ENCODE measurements at regions of chr1 and their contacts with region 1.

Region 1: GRCh38 chr1:171530676-171531075 is 45.3 kb downstream of the PRRC2C start:
- DNase-seq: no peak
- ATAC-seq: no peak
- H3K4me3 ChIP-seq: no peak overlapping the region
- H3K4me3 Mint-ChIP-seq: no peak overlapping the region
- H3K27ac ChIP-seq: no peak overlapping the region
- H3K27ac Mint-ChIP-seq: no peak overlapping the region
- H3K4me1 ChIP-seq: no peaks in the 10 kb centered on the region
- H3K4me1 Mint-ChIP-seq: peaks cover 3 to 18% (median 6%) of the 10 kb centered on the region in 7 donors
- H3K27me3 ChIP-seq: no peaks in the 10 kb centered on the region
- H3K27me3 Mint-ChIP-seq: no peaks in the 10 kb centered on the region

Region 2: GRCh38 chr1:171495444-171495843 is 35.2 kb before region 1 on chr1:
- CTCF ChIA-PET with region 1: no interaction called
- POLR2A ChIA-PET with region 1: no interaction called
- intact Hi-C with region 1: no loop called
- DNase-seq: no peak
- ATAC-seq: no peak
- H3K4me3 ChIP-seq: no peak overlapping the region
- H3K4me3 Mint-ChIP-seq: peak overlapping the region in 9 of 10 donors; percentile 34 to 66 (median 48)
- H3K27ac ChIP-seq: peak overlapping the region; percentile 19
- H3K27ac Mint-ChIP-seq: peak overlapping the region in 5 of 9 donors; percentile 6 to 85 (median 52)
- H3K4me1 ChIP-seq: peaks cover 40 to 45% of the 10 kb centered on the region in 2 donors
- H3K4me1 Mint-ChIP-seq: peaks cover 66 to 99% (median 90%) of the 10 kb centered on the region in 7 donors
- H3K27me3 ChIP-seq: no peaks in the 10 kb centered on the region
- H3K27me3 Mint-ChIP-seq: no peaks in the 10 kb centered on the region

Region 3: DNA sequence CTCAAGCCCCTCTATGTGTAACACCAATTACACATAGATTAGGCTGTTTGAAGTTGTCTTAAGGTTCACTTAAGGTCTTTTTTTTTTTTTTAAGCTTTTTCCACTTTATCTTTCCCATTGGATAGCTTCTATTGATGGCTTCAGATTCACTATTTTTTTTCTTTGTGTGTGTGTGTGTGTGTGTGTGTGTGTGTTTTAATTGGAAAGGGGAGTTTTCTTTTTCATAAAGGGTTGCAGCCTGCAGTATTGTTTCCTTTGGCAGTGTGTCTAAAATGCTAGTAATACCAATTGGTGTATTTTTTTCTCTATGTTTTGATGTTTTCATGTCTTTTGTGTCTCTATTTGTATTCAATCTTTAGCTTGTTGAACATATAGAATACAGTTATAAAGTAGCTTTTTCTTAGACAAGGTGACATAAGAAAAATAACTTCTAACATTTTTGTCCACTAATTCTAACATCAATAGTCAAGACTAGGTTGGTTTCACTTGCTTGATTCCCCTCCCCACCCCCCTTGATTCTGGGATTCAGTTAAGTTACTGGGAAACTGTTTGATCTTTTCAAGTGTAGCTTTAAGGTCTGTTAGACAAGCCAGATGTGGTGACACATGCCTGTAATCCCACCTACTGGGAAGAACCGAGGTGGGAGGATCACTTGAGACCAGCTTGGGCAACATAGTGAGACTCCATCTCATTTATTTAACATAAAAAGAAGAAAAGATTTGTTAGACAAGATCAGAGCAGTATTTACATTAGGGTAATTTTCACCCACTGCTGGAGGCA is 24.0 kb before region 1 on chr1:
- CTCF ChIA-PET with region 1: no interaction called
- POLR2A ChIA-PET with region 1: no interaction called
- intact Hi-C with region 1: loop called in 1 of 2 experiments (anchors 2 kb)
- DNase-seq: no peak
- ATAC-seq: peak; percentile 23
- H3K4me3 ChIP-seq: no peak overlapping the region
- H3K4me3 Mint-ChIP-seq: peak overlapping the region in 9 of 10 donors; percentile 48 to 73 (median 62)
- H3K27ac ChIP-seq: peak overlapping the region; percentile 42
- H3K27ac Mint-ChIP-seq: peak overlapping the region; percentile 43 to 85 (median 73)
- H3K4me1 ChIP-seq: peaks cover 50 to 72% of the 10 kb centered on the region in 2 donors
- H3K4me1 Mint-ChIP-seq: peaks cover 74 to 99% (median 95%) of the 10 kb centered on the region in 7 donors
- H3K27me3 ChIP-seq: no peaks in the 10 kb centered on the region
- H3K27me3 Mint-ChIP-seq: no peaks in the 10 kb centered on the region

Region 4: GRCh38 chr1:171550050-171550449 is 19.4 kb after region 1 on chr1:
- CTCF ChIA-PET with region 1: no interaction called
- POLR2A ChIA-PET with region 1: no interaction called
- intact Hi-C with region 1: loop called in 1 of 2 experiments (anchors 2 kb)
- DNase-seq: no peak
- ATAC-seq: no peak
- H3K4me3 ChIP-seq: no peak overlapping the region
- H3K4me3 Mint-ChIP-seq: no peak overlapping the region
- H3K27ac ChIP-seq: no peak overlapping the region
- H3K27ac Mint-ChIP-seq: no peak overlapping the region
- H3K4me1 ChIP-seq: no peaks in the 10 kb centered on the region
- H3K4me1 Mint-ChIP-seq: peaks cover 6 to 40% (median 33%) of the 10 kb centered on the region in 7 donors
- H3K27me3 ChIP-seq: no peaks in the 10 kb centered on the region
- H3K27me3 Mint-ChIP-seq: no peaks in the 10 kb centered on the region

Region 5: GRCh38 chr1:171563675-171564074 is 33.0 kb after region 1 on chr1:
- CTCF ChIA-PET with region 1: no interaction called
- POLR2A ChIA-PET with region 1: no interaction called
- intact Hi-C with region 1: loop called in 1 of 2 experiments (anchors 2 kb)
- DNase-seq: no peak
- ATAC-seq: no peak
- H3K4me3 ChIP-seq: no peak overlapping the region
- H3K4me3 Mint-ChIP-seq: no peak overlapping the region
- H3K27ac ChIP-seq: no peak overlapping the region
- H3K27ac Mint-ChIP-seq: no peak overlapping the region
- H3K4me1 ChIP-seq: no peaks in the 10 kb centered on the region
- H3K4me1 Mint-ChIP-seq: peaks cover 0 to 7% (median 0%) of the 10 kb centered on the region in 7 donors
- H3K27me3 ChIP-seq: no peaks in the 10 kb centered on the region
- H3K27me3 Mint-ChIP-seq: no peaks in the 10 kb centered on the region

Region 6: DNA sequence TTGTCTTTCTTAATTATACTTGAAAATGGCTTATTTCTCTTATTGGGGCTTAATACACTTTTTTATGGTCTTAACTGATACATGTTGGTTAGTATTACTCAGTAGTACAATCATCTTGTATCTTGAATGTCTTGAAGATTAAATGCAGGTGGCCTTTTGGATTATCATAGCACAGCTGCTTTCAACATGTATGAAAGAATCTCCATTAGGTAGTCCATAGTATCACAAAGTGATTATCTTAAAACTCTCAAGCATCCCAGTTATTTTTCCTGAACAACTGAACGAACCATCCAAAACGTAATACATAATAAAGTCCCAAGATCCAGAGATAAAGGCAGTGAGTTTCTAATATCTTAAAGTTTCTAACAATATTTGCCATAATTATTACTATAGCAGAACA is 39.6 kb after region 1 on chr1:
- CTCF ChIA-PET with region 1: no interaction called
- POLR2A ChIA-PET with region 1: no interaction called
- intact Hi-C with region 1: loop called (anchors 2 to 5 kb)
- DNase-seq: no peak
- ATAC-seq: no peak
- H3K4me3 ChIP-seq: no peak overlapping the region
- H3K4me3 Mint-ChIP-seq: no peak overlapping the region
- H3K27ac ChIP-seq: no peak overlapping the region
- H3K27ac Mint-ChIP-seq: peak overlapping the region in 3 of 9 donors; percentile 9 to 63 (median 52)
- H3K4me1 ChIP-seq: no peaks in the 10 kb centered on the region
- H3K4me1 Mint-ChIP-seq: peaks cover 0 to 11% (median 7%) of the 10 kb centered on the region in 7 donors
- H3K27me3 ChIP-seq: no peaks in the 10 kb centered on the region
- H3K27me3 Mint-ChIP-seq: no peaks in the 10 kb centered on the region

Region 7: DNA sequence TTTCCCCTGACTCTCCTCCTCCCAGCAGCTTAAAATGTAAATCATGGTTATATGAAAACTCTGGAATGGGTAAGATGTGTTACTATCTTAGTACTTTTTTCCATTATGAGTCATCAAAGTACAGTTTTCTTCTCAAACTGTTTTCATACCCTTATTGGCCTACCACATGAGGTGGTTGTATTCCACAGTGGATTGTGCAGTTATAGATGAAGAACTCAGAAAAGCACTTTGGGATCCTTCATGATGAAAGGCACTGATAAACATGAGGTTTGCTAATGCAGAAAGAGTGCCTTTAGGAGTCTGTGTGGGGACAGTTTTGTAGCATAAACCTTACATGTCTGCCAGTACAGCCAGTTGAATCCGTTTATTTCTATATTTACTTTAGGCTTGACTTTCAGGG is 59.3 kb after region 1 on chr1:
- CTCF ChIA-PET with region 1: no interaction called
- POLR2A ChIA-PET with region 1: no interaction called
- intact Hi-C with region 1: no loop called
- DNase-seq: no peak
- ATAC-seq: no peak
- H3K4me3 ChIP-seq: no peak overlapping the region
- H3K4me3 Mint-ChIP-seq: no peak overlapping the region
- H3K27ac ChIP-seq: no peak overlapping the region
- H3K27ac Mint-ChIP-seq: peak overlapping the region in 5 of 9 donors; percentile 17 to 57 (median 57)
- H3K4me1 ChIP-seq: no peaks in the 10 kb centered on the region
- H3K4me1 Mint-ChIP-seq: peaks cover 0 to 8% (median 0%) of the 10 kb centered on the region in 7 donors
- H3K27me3 ChIP-seq: no peaks in the 10 kb centered on the region
- H3K27me3 Mint-ChIP-seq: no peaks in the 10 kb centered on the region

Region 8: DNA sequence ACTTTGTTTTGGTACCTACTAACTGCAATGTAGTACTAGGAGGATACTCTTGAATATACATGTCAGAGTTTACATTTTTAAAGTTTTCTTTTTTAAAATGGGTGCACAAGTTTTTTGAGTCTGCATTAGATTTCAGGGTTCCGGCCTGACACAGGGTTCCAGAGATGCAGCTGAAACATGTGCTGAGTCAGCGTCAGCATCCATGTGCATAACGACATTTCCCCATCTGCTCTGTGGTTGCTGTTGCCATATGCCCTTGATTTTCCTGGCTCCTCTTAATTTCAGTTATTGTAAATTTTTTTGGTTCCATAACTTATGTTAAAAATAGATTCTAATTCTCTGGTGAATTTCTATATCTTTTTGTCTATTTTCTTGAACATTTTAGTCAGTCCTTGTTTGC is 238.5 kb after region 1 on chr1:
- CTCF ChIA-PET with region 1: no interaction called
- POLR2A ChIA-PET with region 1: no interaction called
- intact Hi-C with region 1: no loop called
- DNase-seq: no peak
- ATAC-seq: no peak
- H3K4me3 ChIP-seq: no peak overlapping the region
- H3K4me3 Mint-ChIP-seq: no peak overlapping the region
- H3K27ac ChIP-seq: no peak overlapping the region
- H3K27ac Mint-ChIP-seq: no peak overlapping the region
- H3K4me1 ChIP-seq: no peaks in the 10 kb centered on the region
- H3K4me1 Mint-ChIP-seq: peaks cover 0 to 2% (median 0%) of the 10 kb centered on the region in 7 donors
- H3K27me3 ChIP-seq: no peaks in the 10 kb centered on the region
- H3K27me3 Mint-ChIP-seq: peaks cover 9 to 30% (median 24%) of the 10 kb centered on the region in 5 donors

Measured in naive thymus-derived CD4-positive, alpha-beta T cell (primary cell).